H1 (cell line): ENCODE measurements at regions of chr18 and their contacts with region 1.

Region 1: GRCh38 chr18:3771121-3771971 is 321.4 kb downstream of the TGIF1 start:
- DNase-seq: peak; percentile 54 to 99
- H3K4me3 ChIP-seq: peak overlapping the region; percentile 29 to 63 (median 50); a peak in 7 of 8 replicates
- H3K27ac ChIP-seq: no peak overlapping the region
- H3K4me1 ChIP-seq: peaks cover 0 to 13% (median 6%) of the 10 kb centered on the region in 4 experiments; a peak in 5 of 7 replicates
- H3K27me3 ChIP-seq: no peaks in the 10 kb centered on the region
- CTCF ChIP-seq: peak; percentile 85 to 94 (median 88)
- EP300 ChIP-seq: no peak
- POLR2A ChIP-seq: no peak
- RAD21 ChIP-seq: peak; percentile 84 to 86

Region 2: DNA sequence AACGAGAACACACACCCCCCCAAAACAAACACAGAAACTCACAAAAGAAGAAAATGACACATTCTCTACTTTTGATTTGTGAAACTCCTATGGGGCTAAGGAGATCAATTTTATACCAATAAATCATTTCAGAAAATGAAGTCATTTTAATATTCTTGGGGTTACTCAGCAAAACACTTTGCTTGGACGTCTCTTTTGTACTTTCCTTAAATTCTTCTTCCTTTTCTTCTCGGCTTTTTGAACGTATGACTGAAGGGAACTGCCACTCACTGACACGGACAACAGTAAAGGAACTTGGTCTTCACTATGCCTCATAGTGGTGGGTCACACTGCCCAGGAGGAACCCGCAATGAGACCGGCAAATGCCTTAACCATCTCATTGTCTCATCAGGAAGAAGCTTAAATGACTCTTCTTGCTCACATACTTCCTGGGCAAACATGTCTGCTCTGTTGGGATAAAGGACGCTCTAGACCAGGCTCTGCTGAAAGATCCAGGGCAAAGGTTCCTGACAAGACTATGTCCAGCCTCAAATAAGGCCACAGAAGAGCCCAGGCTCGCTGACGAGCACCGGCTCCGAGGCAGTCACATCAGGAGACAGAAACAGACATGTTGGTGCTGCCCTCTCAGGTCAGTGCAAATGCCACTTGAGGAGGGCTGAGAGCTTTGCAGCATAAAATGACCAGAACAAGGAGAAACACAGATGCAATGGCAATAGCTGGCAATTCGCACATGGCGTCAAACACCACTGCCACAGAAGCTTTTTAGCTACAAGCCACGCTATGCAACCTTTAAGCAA is 115.9 kb before region 1 on chr18:
- CTCF ChIA-PET with region 1: no interaction called
- POLR2A ChIA-PET with region 1: no interaction called
- DNase-seq: no peak
- H3K4me3 ChIP-seq: no peak overlapping the region
- H3K27ac ChIP-seq: no peak overlapping the region
- H3K4me1 ChIP-seq: peaks cover 0 to 3% (median 0%) of the 10 kb centered on the region in 4 experiments; a peak in 2 of 7 replicates
- H3K27me3 ChIP-seq: no peaks in the 10 kb centered on the region
- CTCF ChIP-seq: peak in 2 of 3 experiments; percentile 10 to 13; a peak in 2 of 4 replicates
- EP300 ChIP-seq: no peak
- POLR2A ChIP-seq: no peak
- RAD21 ChIP-seq: peak in 1 of 2 experiments; percentile 14; a peak in 1 of 4 replicates

Region 3: DNA sequence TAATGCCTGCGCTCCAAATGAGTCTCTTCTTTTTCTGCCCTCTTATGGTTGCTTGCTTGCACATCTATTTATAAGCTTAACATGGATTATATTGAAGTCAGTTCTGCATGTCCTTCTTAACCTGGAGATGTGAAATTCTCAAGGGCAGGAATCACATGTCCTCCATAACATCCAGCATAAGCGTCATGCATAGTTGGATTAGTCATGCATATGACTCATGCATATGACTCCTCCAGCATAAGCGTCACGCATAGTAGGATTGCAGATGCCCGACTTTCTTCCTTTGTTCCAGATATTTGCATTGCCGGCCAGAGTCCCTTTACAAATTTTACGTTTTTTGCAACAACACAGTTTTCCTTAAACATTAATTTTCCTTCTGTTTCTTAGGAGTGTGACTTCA is 12.8 kb before region 1 on chr18:
- CTCF ChIA-PET with region 1: interaction called, 36 read pairs
- POLR2A ChIA-PET with region 1: no interaction called
- DNase-seq: no peak
- H3K4me3 ChIP-seq: no peak overlapping the region
- H3K27ac ChIP-seq: no peak overlapping the region
- H3K4me1 ChIP-seq: no peaks in the 10 kb centered on the region; a peak in 1 of 7 replicates
- H3K27me3 ChIP-seq: no peaks in the 10 kb centered on the region
- CTCF ChIP-seq: no peak
- EP300 ChIP-seq: no peak
- POLR2A ChIP-seq: no peak
- RAD21 ChIP-seq: no peak

Region 4: GRCh38 chr18:3799176-3799914 is 28.0 kb after region 1 on chr18:
- CTCF ChIA-PET with region 1: interaction called, 52 read pairs
- POLR2A ChIA-PET with region 1: no interaction called
- DNase-seq: no peak
- H3K4me3 ChIP-seq: no peak overlapping the region
- H3K27ac ChIP-seq: 0 out of 2 replicates have a peak overlapping the region, but pooled peaks have one; percentile 27
- H3K4me1 ChIP-seq: peaks cover 0 to 11% (median 1%) of the 10 kb centered on the region in 4 experiments; a peak in 4 of 7 replicates
- H3K27me3 ChIP-seq: no peaks in the 10 kb centered on the region
- CTCF ChIP-seq: no peak
- EP300 ChIP-seq: no peak
- POLR2A ChIP-seq: no peak
- RAD21 ChIP-seq: no peak

Region 5: DNA sequence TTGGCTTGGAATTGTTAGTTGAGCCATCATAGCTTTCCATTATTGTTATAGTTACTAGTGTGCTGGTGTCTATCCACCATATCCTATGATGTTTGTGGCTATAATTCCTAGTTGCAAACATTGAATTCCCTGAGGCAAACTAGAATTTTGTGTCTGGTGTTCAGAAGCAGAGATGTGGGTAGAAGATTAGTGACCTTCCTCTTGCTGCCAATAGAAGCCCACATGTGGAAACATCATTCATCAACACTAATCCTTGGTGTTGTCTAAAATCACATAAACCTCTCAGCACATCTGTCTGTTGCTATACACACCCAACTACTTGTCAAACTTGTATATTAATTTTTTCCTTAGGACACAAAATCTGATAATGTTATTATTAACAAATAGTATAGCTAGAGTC is 52.8 kb after region 1 on chr18:
- CTCF ChIA-PET with region 1: interaction called, 34 read pairs
- POLR2A ChIA-PET with region 1: no interaction called
- DNase-seq: no peak
- H3K4me3 ChIP-seq: no peak overlapping the region
- H3K27ac ChIP-seq: no peak overlapping the region
- H3K4me1 ChIP-seq: peaks cover 0 to 9% (median 4%) of the 10 kb centered on the region in 4 experiments; a peak in 5 of 7 replicates
- H3K27me3 ChIP-seq: peaks cover 0 to 1% (median 0%) of the 10 kb centered on the region in 4 experiments; a peak in 1 of 7 replicates
- CTCF ChIP-seq: no peak
- EP300 ChIP-seq: no peak
- POLR2A ChIP-seq: no peak
- RAD21 ChIP-seq: no peak

Region 6: DNA sequence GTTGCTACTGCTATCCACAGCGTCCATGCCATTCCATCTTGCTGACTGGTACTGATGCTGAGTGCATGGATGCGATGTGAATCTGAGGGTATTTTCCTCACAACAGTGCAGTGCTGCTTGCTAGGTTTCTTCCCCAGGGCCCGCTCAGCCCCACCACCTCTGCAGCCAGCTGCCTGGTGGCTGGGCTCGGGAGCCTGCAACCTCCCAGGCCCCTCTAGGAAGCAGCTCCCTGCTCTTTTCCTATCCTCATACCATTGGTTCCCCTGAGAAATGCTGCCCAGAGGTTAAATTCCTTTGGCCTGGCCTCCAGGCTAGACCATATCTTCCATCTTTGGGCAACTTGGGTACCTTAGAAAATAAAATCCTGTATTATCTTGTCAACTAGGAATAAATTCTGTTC is 92.2 kb after region 1 on chr18:
- CTCF ChIA-PET with region 1: interaction called, 107 read pairs
- POLR2A ChIA-PET with region 1: interaction called, 4 read pairs
- DNase-seq: no peak
- H3K4me3 ChIP-seq: no peak overlapping the region
- H3K27ac ChIP-seq: no peak overlapping the region
- H3K4me1 ChIP-seq: peaks cover 0 to 2% (median 0%) of the 10 kb centered on the region in 4 experiments; a peak in 2 of 7 replicates
- H3K27me3 ChIP-seq: no peaks in the 10 kb centered on the region
- CTCF ChIP-seq: no peak
- EP300 ChIP-seq: no peak
- POLR2A ChIP-seq: no peak
- RAD21 ChIP-seq: no peak

Region 7: GRCh38 chr18:3983351-3983969 is 212.1 kb after region 1 on chr18:
- CTCF ChIA-PET with region 1: interaction called, 18 read pairs
- POLR2A ChIA-PET with region 1: no interaction called
- DNase-seq: no peak
- H3K4me3 ChIP-seq: no peak overlapping the region
- H3K27ac ChIP-seq: no peak overlapping the region
- H3K4me1 ChIP-seq: peaks cover 0 to 10% (median 6%) of the 10 kb centered on the region in 4 experiments; a peak in 4 of 7 replicates
- H3K27me3 ChIP-seq: no peaks in the 10 kb centered on the region
- CTCF ChIP-seq: no peak
- EP300 ChIP-seq: no peak
- POLR2A ChIP-seq: no peak
- RAD21 ChIP-seq: no peak